CD8-positive, alpha-beta memory T cell (primary cell): ENCODE measurements at regions of chr6 and their contacts with region 1.

Region 1: DNA sequence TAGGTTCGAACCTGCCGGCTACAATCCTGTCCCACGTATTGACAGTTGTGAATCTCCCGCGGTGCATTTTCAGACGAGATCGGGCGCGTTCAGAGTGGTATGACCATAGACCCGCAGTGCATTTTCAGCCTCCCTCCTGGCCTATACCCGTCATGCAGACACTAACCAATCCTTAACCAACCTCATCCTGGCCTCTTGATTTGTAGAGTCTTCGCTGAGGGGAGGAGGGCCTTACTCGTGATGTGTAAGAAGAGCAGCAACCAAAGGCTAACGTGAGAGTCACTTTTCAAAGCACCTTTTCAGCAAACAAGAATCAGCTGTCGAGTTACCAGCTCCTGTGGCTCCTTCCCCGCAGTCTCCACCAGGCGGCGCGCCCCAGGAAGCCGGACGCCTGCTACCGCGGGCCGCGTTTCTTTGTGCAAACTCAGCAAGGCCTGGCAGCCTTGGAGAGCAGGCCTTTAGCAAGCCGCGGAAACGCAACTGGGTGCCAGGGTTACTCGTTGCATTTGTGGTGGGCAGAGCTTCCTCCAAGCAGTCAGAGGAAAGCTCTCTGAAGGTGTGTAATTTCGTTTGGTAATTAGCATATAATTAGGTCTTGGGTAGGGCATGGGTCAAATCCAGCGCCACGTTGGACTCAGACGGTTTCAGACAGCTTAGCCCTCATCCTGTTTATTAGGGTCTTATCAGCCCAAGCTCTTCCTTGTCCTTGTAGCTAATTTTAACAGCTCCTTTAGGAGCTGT is 139.8 kb downstream of the OR2B2 start:
- DNase-seq: peak; percentile 75 to 87 (median 80)
- H3K4me3 ChIP-seq: no peak overlapping the region
- H3K4me3 Mint-ChIP-seq: peak overlapping the region in 4 of 7 donors; percentile 41 to 68 (median 54)
- H3K27ac ChIP-seq: peak overlapping the region; percentile 57
- H3K27ac Mint-ChIP-seq: peak overlapping the region in 4 of 8 donors; percentile 29 to 78 (median 51)
- H3K4me1 ChIP-seq: peaks cover 5% of the 10 kb centered on the region
- H3K4me1 Mint-ChIP-seq: peaks cover 7 to 10% (median 8%) of the 10 kb centered on the region in 3 donors
- H3K27me3 ChIP-seq: no peaks in the 10 kb centered on the region
- H3K27me3 Mint-ChIP-seq: peaks cover 19 to 32% of the 10 kb centered on the region in 2 donors

Region 2: GRCh38 chr6:27188885-27189418 is 583.5 kb before region 1 on chr6:
- CTCF ChIA-PET with region 1: interaction called, 13 read pairs
- POLR2A ChIA-PET with region 1: no interaction called
- DNase-seq: peak; percentile 23 to 68 (median 60)
- H3K4me3 ChIP-seq: peak overlapping the region; percentile 80
- H3K4me3 Mint-ChIP-seq: peak overlapping the region; percentile 85 to 94 (median 93)
- H3K27ac ChIP-seq: peak overlapping the region; percentile 83
- H3K27ac Mint-ChIP-seq: peak overlapping the region in 7 of 8 donors; percentile 48 to 93 (median 83)
- H3K4me1 ChIP-seq: no peaks in the 10 kb centered on the region
- H3K4me1 Mint-ChIP-seq: peaks cover 10 to 17% (median 13%) of the 10 kb centered on the region in 3 donors
- H3K27me3 ChIP-seq: no peaks in the 10 kb centered on the region
- H3K27me3 Mint-ChIP-seq: peaks cover 0 to 3% of the 10 kb centered on the region in 2 donors

Region 3: GRCh38 chr6:27617700-27618689 is 154.4 kb before region 1 on chr6:
- CTCF ChIA-PET with region 1: no interaction called
- POLR2A ChIA-PET with region 1: no interaction called
- DNase-seq: no peak
- H3K4me3 ChIP-seq: no peak overlapping the region
- H3K4me3 Mint-ChIP-seq: peak overlapping the region in 3 of 7 donors; percentile 0 to 10 (median 4)
- H3K27ac ChIP-seq: peak overlapping the region; percentile 33
- H3K27ac Mint-ChIP-seq: peak overlapping the region in 1 of 8 donors; percentile 49
- H3K4me1 ChIP-seq: no peaks in the 10 kb centered on the region
- H3K4me1 Mint-ChIP-seq: peaks cover 12 to 19% (median 18%) of the 10 kb centered on the region in 3 donors
- H3K27me3 ChIP-seq: peaks cover 25% of the 10 kb centered on the region
- H3K27me3 Mint-ChIP-seq: peaks cover 44 to 75% of the 10 kb centered on the region in 2 donors

Region 4: GRCh38 chr6:27761391-27761790 is 11.0 kb before region 1 on chr6:
- CTCF ChIA-PET with region 1: interaction called, 53 read pairs
- POLR2A ChIA-PET with region 1: no interaction called
- DNase-seq: no peak
- H3K4me3 ChIP-seq: no peak overlapping the region
- H3K4me3 Mint-ChIP-seq: peak overlapping the region in 2 of 7 donors; percentile 4 to 9
- H3K27ac ChIP-seq: no peak overlapping the region
- H3K27ac Mint-ChIP-seq: peak overlapping the region in 1 of 8 donors; percentile 1
- H3K4me1 ChIP-seq: peaks cover 11% of the 10 kb centered on the region
- H3K4me1 Mint-ChIP-seq: peaks cover 12 to 24% (median 16%) of the 10 kb centered on the region in 3 donors
- H3K27me3 ChIP-seq: no peaks in the 10 kb centered on the region
- H3K27me3 Mint-ChIP-seq: peaks cover 7 to 9% of the 10 kb centered on the region in 2 donors

Region 5: GRCh38 chr6:27795697-27796494 is 23.5 kb after region 1 on chr6:
- CTCF ChIA-PET with region 1: interaction called, 25 read pairs
- POLR2A ChIA-PET with region 1: interaction called, 3 read pairs
- DNase-seq: peak in 4 of 5 donors; percentile 39 to 77 (median 64)
- H3K4me3 ChIP-seq: no peak overlapping the region
- H3K4me3 Mint-ChIP-seq: peak overlapping the region in 1 of 7 donors; percentile 40
- H3K27ac ChIP-seq: no peak overlapping the region
- H3K27ac Mint-ChIP-seq: peak overlapping the region in 5 of 8 donors; percentile 3 to 64 (median 53)
- H3K4me1 ChIP-seq: peaks cover 20% of the 10 kb centered on the region
- H3K4me1 Mint-ChIP-seq: peaks cover 22 to 29% (median 28%) of the 10 kb centered on the region in 3 donors
- H3K27me3 ChIP-seq: peaks cover 8% of the 10 kb centered on the region
- H3K27me3 Mint-ChIP-seq: peaks cover 10% of the 10 kb centered on the region in 2 donors

Region 6: DNA sequence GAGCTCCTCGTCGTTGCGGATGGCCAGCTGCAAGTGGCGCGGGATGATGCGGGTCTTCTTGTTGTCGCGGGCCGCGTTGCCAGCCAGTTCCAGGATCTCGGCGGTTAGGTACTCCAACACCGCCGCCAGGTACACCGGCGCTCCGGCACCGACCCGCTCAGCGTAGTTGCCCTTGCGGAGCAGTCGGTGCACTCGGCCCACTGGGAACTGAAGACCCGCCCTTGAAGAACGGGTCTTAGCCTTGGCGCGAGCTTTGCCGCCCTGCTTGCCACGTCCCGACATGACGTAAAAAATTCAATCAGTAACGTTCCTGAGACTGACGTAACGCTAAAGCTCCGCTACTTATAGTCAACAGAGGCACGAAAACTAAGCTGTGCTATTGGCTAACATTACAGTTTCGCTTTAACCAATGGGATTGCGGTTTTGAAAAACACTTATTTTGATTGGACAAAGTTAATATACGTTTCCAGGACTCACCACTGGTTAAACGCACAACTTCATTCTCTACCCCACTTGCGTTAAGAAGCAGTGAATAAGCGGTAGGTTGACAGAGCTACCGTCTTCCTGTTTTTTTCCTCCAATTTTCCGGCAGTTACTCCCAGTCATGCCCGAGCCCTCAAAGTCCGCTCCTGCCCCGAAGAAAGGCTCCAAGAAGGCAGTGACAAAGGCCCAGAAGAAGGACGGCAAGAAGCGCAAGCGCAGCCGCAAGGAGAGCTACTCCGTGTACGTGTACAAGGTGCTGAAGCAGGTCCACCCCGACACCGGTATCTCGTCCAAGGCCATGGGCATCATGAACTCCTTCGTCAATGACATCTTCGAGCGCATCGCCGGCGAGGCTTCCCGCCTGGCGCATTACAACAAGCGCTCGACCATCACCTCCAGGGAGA is 65.9 kb after region 1 on chr6:
- CTCF ChIA-PET with region 1: interaction called, 10 read pairs
- POLR2A ChIA-PET with region 1: no interaction called
- DNase-seq: peak; percentile 67 to 93 (median 92)
- H3K4me3 ChIP-seq: peak overlapping the region; percentile 71
- H3K4me3 Mint-ChIP-seq: no peak overlapping the region
- H3K27ac ChIP-seq: peak overlapping the region; percentile 99
- H3K27ac Mint-ChIP-seq: no peak overlapping the region
- H3K4me1 ChIP-seq: peaks cover 30% of the 10 kb centered on the region
- H3K4me1 Mint-ChIP-seq: peaks cover 12 to 23% (median 19%) of the 10 kb centered on the region in 3 donors
- H3K27me3 ChIP-seq: no peaks in the 10 kb centered on the region
- H3K27me3 Mint-ChIP-seq: peaks cover 5 to 13% of the 10 kb centered on the region in 2 donors

Region 7: GRCh38 chr6:27902335-27903314 is 130.2 kb after region 1 on chr6:
- CTCF ChIA-PET with region 1: interaction called, 122 read pairs
- POLR2A ChIA-PET with region 1: no interaction called
- DNase-seq: peak; percentile 78 to 90 (median 85)
- H3K4me3 ChIP-seq: peak overlapping the region; percentile 71
- H3K4me3 Mint-ChIP-seq: peak overlapping the region; percentile 90 to 94 (median 92)
- H3K27ac ChIP-seq: peak overlapping the region; percentile 68
- H3K27ac Mint-ChIP-seq: peak overlapping the region; percentile 94 to 98 (median 97)
- H3K4me1 ChIP-seq: peaks cover 5% of the 10 kb centered on the region
- H3K4me1 Mint-ChIP-seq: peaks cover 10 to 16% (median 11%) of the 10 kb centered on the region in 3 donors
- H3K27me3 ChIP-seq: peaks cover 2% of the 10 kb centered on the region
- H3K27me3 Mint-ChIP-seq: peaks cover 11 to 18% of the 10 kb centered on the region in 2 donors